ENCODE measurements at regions of chr17 and their contacts with region 1.

Region 1: DNA sequence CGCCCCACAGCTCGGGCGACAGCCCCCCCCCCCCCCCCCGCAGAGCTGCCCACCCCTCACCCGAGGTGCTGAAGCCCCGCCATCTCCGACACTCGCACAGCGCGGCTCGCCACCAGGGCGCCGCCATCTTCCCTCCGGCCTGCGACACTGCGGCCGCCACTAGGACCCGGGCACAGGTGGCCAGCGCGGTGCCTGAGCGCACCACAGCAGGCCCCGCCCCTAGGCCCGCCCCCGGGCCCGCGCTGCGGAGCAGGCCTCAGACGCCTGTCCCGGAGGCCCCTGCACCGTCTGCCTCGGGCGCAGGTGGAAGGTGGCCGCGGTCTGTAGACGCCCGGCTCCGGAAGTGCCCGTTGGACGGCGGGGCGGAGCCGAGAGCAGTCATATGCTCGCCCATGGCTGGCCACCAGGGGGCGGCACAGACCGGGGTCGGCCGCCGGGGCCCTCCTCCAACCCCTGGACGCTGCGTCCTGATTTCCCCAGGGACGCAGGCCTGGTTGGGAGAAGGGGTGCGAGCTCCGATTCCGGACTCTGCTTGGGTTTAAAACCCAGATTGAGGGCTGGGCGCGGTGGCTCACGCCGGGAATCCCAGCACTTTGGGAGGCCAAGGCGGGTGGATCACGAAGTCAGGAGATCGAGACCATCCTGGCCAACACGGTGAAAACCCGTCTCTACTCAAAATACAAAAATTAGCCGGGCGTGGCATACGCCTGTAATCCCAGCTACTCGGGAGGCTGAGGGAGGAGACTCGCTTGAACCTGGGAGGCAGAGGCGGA is at the start of gene MRPL38:
- DNase-seq: peak; percentile 97
- ATAC-seq: peak; percentile 97
- H3K4me3 Mint-ChIP-seq: peak within 1 kb of the TSS; percentile 90
- H3K27ac Mint-ChIP-seq: peak within 1 kb of the TSS; percentile 92
- H3K4me1 Mint-ChIP-seq: peaks cover 11% of the 10 kb centered on the region
- H3K27me3 Mint-ChIP-seq: no peaks in the 10 kb centered on the region
- CTCF ChIP-seq: peak; percentile 61
- total RNA-seq, gene MRPL38: 132 and 137 TPM in 2 replicates

Region 2: GRCh38 chr17:75845049-75845860 is 59.7 kb before region 1 on chr17:
- CTCF ChIA-PET with region 1: interaction called, 5 read pairs
- POLR2A ChIA-PET with region 1: no interaction called
- intact Hi-C with region 1: loop called (anchors 1 kb)
- DNase-seq: peak; percentile 71
- ATAC-seq: peak; percentile 90
- H3K4me3 Mint-ChIP-seq: peak overlapping the region; percentile 66
- H3K27ac Mint-ChIP-seq: peak overlapping the region; percentile 75
- H3K4me1 Mint-ChIP-seq: peaks cover 29% of the 10 kb centered on the region
- H3K27me3 Mint-ChIP-seq: no peaks in the 10 kb centered on the region
- CTCF ChIP-seq: no peak

Region 3: DNA sequence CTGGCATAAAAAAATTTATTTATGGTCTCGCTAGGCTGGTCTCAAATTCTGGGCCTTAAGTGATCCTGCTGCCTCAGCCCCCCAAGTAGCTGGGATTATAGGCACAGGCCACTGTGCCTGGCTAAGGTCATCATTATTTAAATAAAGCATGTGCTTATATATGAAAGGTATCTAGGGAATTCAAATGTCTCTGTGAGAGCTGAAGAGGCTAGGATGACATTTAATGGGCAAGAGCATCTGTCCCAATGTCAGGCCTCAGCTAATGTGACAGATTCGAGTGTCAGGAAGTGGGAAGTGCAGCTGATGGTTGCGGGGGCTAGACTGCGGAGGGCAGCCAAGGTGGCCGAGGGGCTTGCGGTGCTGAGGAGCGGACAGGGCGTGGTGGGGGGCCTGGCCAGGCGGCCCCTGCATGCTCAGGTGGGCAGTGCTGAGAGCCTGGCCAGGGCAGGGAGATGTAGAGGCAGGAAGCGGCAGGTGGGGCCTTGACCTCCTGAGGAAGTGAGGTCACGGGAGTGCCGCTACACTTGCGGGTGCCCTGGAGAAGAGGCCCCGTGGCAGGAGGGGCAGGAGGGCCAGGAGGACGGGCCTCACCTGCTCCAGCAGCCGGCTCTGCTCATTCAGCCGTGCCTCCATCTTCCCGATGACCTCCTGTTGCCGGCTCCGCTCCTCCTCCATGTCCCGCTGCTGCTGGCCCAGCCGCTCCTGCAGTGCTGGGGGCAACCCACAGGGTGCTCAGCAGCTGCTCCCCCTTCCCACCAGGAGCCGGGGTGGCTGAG is 12.4 kb after region 1 on chr17:
- CTCF ChIA-PET with region 1: no interaction called
- POLR2A ChIA-PET with region 1: no interaction called
- intact Hi-C with region 1: no loop called
- DNase-seq: no peak
- ATAC-seq: no peak
- H3K4me3 Mint-ChIP-seq: no peak overlapping the region
- H3K27ac Mint-ChIP-seq: no peak overlapping the region
- H3K4me1 Mint-ChIP-seq: no peaks in the 10 kb centered on the region
- H3K27me3 Mint-ChIP-seq: no peaks in the 10 kb centered on the region
- CTCF ChIP-seq: no peak

Region 4: DNA sequence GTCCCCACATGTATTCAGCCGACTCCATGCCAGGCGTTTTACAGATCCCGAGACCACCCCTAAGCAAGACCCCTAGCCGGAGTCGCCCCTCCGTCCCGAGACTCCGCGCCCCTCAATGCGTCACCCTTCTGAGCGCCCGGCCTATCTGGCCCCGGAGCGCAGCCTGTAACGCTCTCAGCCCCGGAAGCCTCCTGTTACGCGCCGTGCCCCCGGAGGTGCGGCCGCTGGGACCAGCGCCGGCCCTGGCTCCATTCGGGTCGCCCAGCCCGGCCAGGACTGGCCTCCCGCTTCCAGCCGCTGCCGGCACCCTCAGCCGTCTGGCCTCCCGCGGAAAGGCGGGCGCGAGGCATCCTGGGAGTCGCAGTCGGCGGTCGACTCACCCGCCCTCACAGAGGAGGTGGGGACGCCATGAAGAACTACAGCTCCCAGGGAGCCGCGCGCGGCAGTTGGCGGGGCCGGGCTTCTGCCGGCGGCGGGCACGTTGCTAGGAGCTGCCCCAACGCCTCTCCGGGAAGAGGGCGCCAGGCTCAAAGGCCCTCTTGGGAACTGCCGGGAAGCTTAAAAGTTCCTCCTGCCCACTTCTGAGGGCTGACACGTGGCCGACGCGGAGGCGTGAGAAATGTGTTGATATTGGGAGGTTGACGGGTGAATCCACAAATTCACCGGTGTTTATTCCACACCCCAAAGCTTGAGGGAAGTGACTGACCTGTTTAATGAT is 35.9 kb after region 1 on chr17 and contains the start of gene FBF1:
- CTCF ChIA-PET with region 1: no interaction called
- POLR2A ChIA-PET with region 1: interaction called, 4 read pairs
- intact Hi-C with region 1: loop called (anchors 1 kb)
- DNase-seq: peak; percentile 83
- ATAC-seq: peak; percentile 100
- H3K4me3 Mint-ChIP-seq: peak within 1 kb of the TSS; percentile 86
- H3K27ac Mint-ChIP-seq: peak within 1 kb of the TSS; percentile 61
- H3K4me1 Mint-ChIP-seq: peaks cover 13% of the 10 kb centered on the region
- H3K27me3 Mint-ChIP-seq: no peaks in the 10 kb centered on the region
- CTCF ChIP-seq: no peak
- total RNA-seq, gene FBF1: 13.2 and 15.1 TPM in 2 replicates

Region 5: GRCh38 chr17:76005263-76006149 is 100.6 kb after region 1 on chr17:
- CTCF ChIA-PET with region 1: interaction called, 47 read pairs
- POLR2A ChIA-PET with region 1: interaction called, 30 read pairs
- intact Hi-C with region 1: loop called (anchors 1 kb)
- DNase-seq: peak; percentile 73
- ATAC-seq: peak; percentile 85
- H3K4me3 Mint-ChIP-seq: no peak overlapping the region
- H3K27ac Mint-ChIP-seq: peak overlapping the region; percentile 24
- H3K4me1 Mint-ChIP-seq: no peaks in the 10 kb centered on the region
- H3K27me3 Mint-ChIP-seq: no peaks in the 10 kb centered on the region
- CTCF ChIP-seq: no peak

Region 6: DNA sequence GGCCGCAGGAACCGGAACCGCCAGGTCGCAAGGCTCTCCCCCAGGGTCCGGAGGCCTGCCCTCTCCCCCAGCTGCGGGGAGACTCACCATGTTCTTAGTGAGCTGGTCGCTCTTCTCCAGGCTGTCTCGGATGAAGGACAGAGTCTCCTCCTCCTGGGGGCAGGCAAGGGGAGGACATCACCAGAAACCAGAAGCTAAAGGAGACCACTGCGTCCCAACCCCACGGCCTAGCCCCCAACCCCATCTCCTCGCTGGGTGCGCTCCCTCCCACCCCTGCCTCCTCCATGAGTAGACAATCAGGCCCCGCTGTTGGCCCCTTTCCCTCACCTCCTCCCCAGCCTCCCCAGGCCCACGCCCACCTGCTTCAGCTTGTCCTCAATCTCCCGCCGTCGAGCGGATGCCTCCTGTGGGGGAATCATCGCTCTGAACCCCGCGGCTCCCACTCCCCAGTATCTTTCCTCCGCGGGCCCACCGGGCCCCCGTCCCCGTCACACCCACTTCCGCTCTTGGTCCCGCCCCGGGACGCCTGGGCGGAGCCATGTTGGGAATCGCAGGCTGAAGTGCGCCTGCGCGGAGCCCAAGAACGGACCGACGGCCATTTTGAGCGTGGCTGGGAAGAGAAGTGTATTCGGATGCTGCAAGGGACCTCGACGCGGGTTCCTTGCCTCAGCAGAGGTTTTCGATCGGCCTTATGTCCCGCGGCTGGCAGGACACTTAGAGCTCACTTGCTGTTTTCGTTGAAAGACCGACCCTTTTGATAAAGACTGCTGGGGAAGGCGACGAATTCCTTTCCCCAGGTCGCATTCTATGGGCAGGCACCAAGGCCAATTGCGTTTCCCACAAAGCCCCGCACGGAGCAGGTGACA is 198.6 kb after region 1 on chr17 and contains the start of gene EXOC7:
- CTCF ChIA-PET with region 1: no interaction called
- POLR2A ChIA-PET with region 1: interaction called, 3 read pairs
- intact Hi-C with region 1: loop called (anchors 1 kb)
- DNase-seq: peak; percentile 95
- ATAC-seq: peak; percentile 97
- H3K4me3 Mint-ChIP-seq: peak within 1 kb of the TSS; percentile 98
- H3K27ac Mint-ChIP-seq: peak within 1 kb of the TSS; percentile 91
- H3K4me1 Mint-ChIP-seq: peaks cover 20% of the 10 kb centered on the region
- H3K27me3 Mint-ChIP-seq: no peaks in the 10 kb centered on the region
- CTCF ChIP-seq: no peak
- total RNA-seq, gene EXOC7: 133 and 146 TPM in 2 replicates

Measured in activated B cell treated with CpG ODN at 0.5 μM for 24 hours (primary cell).